Pancreas (tissue), 10 donors: ENCODE measurements at regions of chr12 and their contacts with region 1.

Region 1: DNA sequence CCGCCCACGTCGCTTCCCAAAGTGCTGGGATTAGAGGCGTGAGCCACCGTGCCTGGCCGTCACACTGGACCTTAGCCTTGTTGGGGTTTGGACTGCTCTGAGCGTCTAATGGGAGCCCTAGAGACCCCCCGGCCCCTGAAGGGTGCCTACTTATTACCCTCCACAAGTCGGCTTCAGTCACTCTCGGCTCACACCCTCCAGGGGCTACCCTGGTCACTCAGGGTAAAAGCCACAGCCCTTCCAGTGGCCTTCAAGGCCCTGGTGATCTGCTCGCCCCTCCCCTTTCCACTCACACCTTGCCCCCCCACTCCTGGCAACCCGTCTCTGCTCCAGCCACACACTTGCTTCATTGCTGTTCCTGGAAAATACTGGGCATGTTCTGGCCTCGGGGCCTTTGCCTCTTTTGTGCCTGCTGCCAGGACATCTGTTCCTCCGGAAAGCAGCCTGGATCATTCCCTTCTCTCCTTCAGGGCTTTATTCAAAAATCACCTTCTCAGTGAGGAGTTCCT is 3.6 kb upstream of the MORN3 start:
- DNase-seq: peak; percentile 70 to 89 (median 84)
- ATAC-seq: peak; percentile 85 to 90 (median 87)
- H3K4me3 ChIP-seq: peak overlapping the region in 3 of 4 donors; percentile 13 to 50 (median 42)
- H3K27ac ChIP-seq: peak overlapping the region; percentile 73 to 94 (median 82)
- H3K4me1 ChIP-seq: peaks cover 0 to 18% (median 7%) of the 10 kb centered on the region in 3 donors
- H3K27me3 ChIP-seq: no peaks in the 10 kb centered on the region
- CTCF ChIP-seq: no peak

Region 2: GRCh38 chr12:121499929-121500793 is 172.9 kb before region 1 on chr12:
- intact Hi-C with region 1: loop called in 1 of 3 experiments (anchors 10 kb)
- DNase-seq: peak; percentile 42 to 93 (median 72)
- ATAC-seq: peak; percentile 82 to 97 (median 95)
- H3K4me3 ChIP-seq: no peak overlapping the region
- H3K27ac ChIP-seq: no peak overlapping the region
- H3K4me1 ChIP-seq: no peaks in the 10 kb centered on the region
- H3K27me3 ChIP-seq: no peaks in the 10 kb centered on the region
- CTCF ChIP-seq: peak; percentile 95 to 99 (median 98)

Region 3: DNA sequence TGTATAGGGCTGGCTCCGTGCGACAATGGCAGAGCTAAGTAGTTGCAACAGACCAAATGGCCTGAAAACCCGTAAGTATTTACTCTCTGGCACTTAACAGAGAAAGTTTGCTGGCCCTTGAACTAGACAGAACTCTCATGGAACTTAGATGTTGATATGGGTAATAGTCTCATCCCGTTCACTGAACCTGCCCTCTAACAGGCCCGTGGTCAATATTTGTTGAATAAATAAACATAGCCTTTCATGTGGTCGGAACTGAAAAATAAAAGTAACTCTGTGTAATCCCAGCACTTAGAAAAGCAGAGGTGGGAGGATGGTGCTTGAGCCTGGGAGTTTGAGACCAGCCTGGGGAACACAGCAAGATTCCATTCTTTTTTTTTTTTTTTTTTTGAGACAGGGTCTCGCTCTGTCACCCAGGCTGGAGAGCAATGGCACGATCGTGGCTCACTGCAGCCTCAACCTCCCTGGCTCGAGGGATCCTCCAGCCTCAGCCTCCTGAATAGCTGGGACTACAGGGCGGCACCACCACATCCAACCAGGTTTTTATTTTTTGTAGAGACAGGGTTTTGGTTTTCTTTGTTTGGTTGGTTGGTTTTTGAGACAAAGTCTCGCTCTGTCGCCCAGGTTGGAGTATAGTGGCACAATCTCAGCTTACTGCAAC is 122.0 kb before region 1 on chr12:
- intact Hi-C with region 1: loop called in 2 of 3 experiments (anchors 2 to 10 kb)
- DNase-seq: peak in 1 of 6 donors; percentile 9
- ATAC-seq: no peak
- H3K4me3 ChIP-seq: no peak overlapping the region
- H3K27ac ChIP-seq: no peak overlapping the region
- H3K4me1 ChIP-seq: no peaks in the 10 kb centered on the region
- H3K27me3 ChIP-seq: no peaks in the 10 kb centered on the region
- CTCF ChIP-seq: no peak

Region 4: GRCh38 chr12:121925358-121925695 is 252.3 kb after region 1 on chr12:
- intact Hi-C with region 1: no loop called
- DNase-seq: no peak
- ATAC-seq: no peak
- H3K4me3 ChIP-seq: no peak overlapping the region
- H3K27ac ChIP-seq: peak overlapping the region in 1 of 4 donors; percentile 23
- H3K4me1 ChIP-seq: no peaks in the 10 kb centered on the region
- H3K27me3 ChIP-seq: no peaks in the 10 kb centered on the region
- CTCF ChIP-seq: no peak